ENCODE measurements at regions of chr7 and their contacts with region 1.

Region 1: DNA sequence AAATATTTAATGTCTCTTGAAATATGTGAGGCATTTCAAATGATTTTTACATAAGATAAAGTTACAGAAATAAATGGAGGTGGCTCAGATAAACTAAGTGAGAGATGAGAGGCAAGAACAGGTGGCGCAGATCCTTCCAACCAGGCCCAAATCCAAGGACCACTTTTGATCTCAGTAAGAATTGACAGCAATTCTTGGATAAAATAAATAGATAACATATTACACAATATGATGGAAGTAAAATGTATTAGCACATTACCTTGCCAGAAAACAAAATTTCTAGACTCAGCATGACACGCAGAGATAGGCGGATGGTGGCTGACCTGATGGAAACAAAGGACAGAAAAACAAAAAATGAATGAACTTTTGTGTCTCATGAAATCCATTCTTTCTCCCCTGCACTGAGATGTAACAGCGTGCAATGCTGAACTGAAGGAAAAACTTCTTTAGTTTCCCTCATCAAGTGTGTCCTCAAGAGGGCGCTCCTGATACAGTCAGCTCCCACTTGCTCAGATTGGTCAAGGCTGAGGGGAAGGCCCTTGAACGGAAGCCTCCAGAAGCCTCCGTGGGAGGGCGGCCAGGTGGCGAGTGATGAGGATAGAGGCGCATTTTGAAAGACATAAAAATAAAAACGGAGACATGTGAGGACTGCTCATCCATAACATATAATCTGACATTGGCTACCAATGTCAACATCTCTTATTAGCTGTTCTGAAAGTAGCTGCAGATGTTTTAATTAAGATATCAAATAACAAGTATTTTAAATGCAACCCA is 62.8 kb upstream of the GSDME start:
- DNase-seq: peak; percentile 90
- H3K4me3 ChIP-seq: no peak overlapping the region
- H3K27ac ChIP-seq: peak overlapping the region; percentile 22 to 86 (median 76)
- H3K4me1 ChIP-seq: peaks cover 8 to 32% (median 23%) of the 10 kb centered on the region in 6 donors
- H3K27me3 ChIP-seq: no peaks in the 10 kb centered on the region
- CTCF ChIP-seq: peak; percentile 46 to 87 (median 78)
- POLR2A ChIP-seq: no peak

Region 2: GRCh38 chr7:24979863-24980533 is 159.9 kb after region 1 on chr7 and contains the start of gene OSBPL3:
- intact Hi-C with region 1: loop called (anchors 5 kb)
- DNase-seq: peak; percentile 98
- H3K4me3 ChIP-seq: peak within 1 kb of the TSS; percentile 59 to 85 (median 78)
- H3K27ac ChIP-seq: peak within 1 kb of the TSS; percentile 67 to 91 (median 86)
- H3K4me1 ChIP-seq: peaks cover 13 to 71% (median 32%) of the 10 kb centered on the region in 6 donors
- H3K27me3 ChIP-seq: peaks cover 0 to 28% (median 0%) of the 10 kb centered on the region in 7 donors
- CTCF ChIP-seq: no peak
- POLR2A ChIP-seq: peak in 2 of 3 donors; percentile 33 to 75
- total RNA-seq, gene OSBPL3: 18.5 to 33.9 (median 27.0) TPM

Measured in spleen (tissue), 13 donors.